AG04449 (cell line): ENCODE measurements at regions of chr1 and their contacts with region 1.

Region 1: GRCh38 chr1:84603941-84604830 is 29.9 kb upstream of the CTBS start:
- DNase-seq: peak; percentile 63
- H3K4me3 ChIP-seq: peak overlapping the region; percentile 43
- CTCF ChIP-seq: peak; percentile 58

Region 2: DNA sequence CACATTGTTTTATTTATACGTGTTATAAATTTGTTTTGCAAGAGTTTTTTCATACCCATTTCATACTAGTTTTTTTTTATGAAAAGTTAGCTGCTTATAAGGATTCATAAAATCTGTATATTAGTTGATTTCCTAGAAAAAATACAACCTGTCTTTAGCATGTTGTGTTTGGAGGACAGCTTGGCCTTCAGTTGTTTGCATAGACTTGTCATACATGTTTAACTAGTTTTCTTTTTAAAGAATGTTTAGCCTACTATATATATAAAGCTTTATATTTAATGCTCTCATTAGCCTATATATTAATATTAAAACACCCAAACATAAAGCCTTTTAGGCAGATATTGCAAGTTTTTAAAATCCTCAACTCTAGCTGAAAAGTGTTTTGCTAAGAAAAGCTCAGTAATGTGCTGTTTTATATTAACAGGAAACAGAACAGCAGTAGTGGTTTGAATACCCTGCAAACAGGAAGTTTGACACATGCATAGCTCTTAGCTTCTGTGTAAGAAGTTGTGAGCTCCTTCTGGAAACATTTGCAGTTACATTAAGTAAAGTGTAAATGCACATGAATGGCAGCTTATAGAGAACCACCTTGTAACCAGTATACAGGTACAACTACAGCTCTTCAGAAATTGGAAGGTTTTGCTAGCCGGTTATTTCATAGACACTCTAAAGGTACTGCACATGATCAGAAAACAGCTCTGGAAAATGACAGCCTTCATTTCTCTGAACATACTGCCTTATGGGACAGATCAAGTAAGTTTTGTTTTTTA is 460.2 kb before region 1 on chr1 and contains the start of gene PRKACB:
- CTCF ChIA-PET with region 1: interaction called, 26 read pairs
- POLR2A ChIA-PET with region 1: no interaction called
- DNase-seq: no peak
- H3K4me3 ChIP-seq: no peak within 1 kb of the TSS
- CTCF ChIP-seq: no peak

Region 3: DNA sequence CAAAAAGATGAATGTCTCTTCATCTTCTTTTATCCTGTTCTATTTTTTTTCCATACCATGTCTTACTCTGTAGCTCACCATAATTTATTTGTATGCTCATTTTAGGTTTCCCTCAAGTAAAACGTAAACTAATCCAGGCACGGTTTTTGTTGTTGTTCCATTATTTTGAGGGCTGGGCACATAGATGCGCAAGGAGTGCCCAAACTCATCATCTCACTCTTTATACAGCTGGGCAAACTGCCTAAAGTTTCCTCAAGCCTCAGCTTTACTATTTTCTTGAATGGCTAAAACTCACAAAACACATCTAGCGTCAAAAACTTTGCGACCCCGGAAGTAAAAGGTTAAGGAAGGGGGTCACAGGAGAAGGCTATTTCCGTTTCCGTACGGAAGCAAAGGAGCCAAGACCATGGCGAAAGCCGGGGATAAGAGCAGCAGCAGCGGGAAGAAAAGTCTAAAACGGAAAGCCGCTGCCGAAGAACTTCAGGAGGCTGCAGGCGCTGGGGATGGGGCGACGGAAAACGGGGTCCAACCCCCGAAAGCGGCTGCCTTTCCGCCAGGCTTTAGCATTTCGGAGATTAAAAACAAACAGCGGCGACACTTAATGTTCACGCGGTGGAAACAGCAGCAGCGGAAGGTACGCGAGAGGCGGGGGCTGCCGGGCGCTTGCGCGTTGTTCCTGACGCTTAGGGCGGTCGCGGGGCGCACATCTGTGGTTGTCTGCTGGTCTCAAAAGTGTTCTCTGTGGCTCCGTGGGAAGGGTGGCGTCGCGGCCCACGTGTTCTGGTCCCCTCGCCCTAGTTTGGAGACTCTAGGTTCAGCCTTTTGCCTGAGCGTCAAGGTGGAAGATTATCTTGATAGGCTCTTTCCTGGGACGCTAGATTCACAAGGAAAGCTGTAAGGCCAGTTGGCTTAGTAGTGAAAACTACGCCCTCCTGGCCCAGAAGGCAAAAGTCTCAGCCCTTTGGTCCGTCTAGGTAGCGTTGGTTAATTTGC is 125.0 kb before region 1 on chr1 and contains the start of gene RPF1:
- CTCF ChIA-PET with region 1: interaction called, 17 read pairs
- POLR2A ChIA-PET with region 1: interaction called, 9 read pairs
- DNase-seq: peak; percentile 17
- H3K4me3 ChIP-seq: peak within 1 kb of the TSS; percentile 81
- CTCF ChIP-seq: no peak

Region 4: GRCh38 chr1:84506002-84506728 is 98.0 kb before region 1 on chr1 and contains the starts of genes GNG5 and SPATA1:
- CTCF ChIA-PET with region 1: interaction called, 6 read pairs
- POLR2A ChIA-PET with region 1: interaction called, 17 read pairs
- DNase-seq: peak; percentile 56
- H3K4me3 ChIP-seq: peak within 1 kb of the TSS; percentile 92
- CTCF ChIP-seq: no peak

Region 5: GRCh38 chr1:84620720-84621313 is 16.6 kb after region 1 on chr1:
- CTCF ChIA-PET with region 1: interaction called, 49 read pairs
- POLR2A ChIA-PET with region 1: no interaction called
- DNase-seq: no peak
- H3K4me3 ChIP-seq: peak overlapping the region; percentile 69
- CTCF ChIP-seq: peak; percentile 79